ENCODE measurements at regions of chr9 and their contacts with region 1.

Region 1: DNA sequence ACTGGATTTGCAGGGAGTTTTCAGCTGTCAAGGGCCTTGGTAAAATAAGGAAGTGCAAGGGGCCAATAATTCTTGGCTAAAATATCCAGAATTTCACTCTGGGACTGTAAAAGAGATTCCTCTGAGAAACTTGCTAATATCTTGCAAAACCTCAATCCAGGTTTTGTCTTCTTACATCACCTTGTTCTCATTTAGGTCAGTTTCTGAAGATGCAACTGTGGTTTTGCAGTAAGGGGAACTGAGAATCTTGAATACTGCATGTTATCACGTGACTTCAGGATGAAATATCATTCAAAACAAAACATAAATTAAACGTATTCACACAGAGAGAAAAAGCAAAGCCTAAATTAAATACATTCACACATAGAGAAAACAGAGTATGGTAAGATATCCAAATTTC is 35.0 kb upstream of the RIC1 start:
- DNase-seq: no peak
- H3K4me3 ChIP-seq: no peak overlapping the region
- H3K27ac ChIP-seq: no peak overlapping the region
- H3K4me1 ChIP-seq: peaks cover 13% of the 10 kb centered on the region
- H3K27me3 ChIP-seq: no peaks in the 10 kb centered on the region
- CTCF ChIP-seq: no peak

Region 2: GRCh38 chr9:5186416-5187169 is 407.3 kb before region 1 on chr9:
- intact Hi-C with region 1: loop called (anchors 5 kb)
- DNase-seq: no peak
- H3K4me3 ChIP-seq: no peak overlapping the region
- H3K27ac ChIP-seq: no peak overlapping the region
- H3K4me1 ChIP-seq: no peaks in the 10 kb centered on the region
- H3K27me3 ChIP-seq: peaks cover 10% of the 10 kb centered on the region
- CTCF ChIP-seq: peak; percentile 79

Region 3: GRCh38 chr9:5449521-5450358 is 144.2 kb before region 1 on chr9:
- intact Hi-C with region 1: loop called (anchors 5 kb)
- DNase-seq: no peak
- H3K4me3 ChIP-seq: peak overlapping the region; percentile 71
- H3K27ac ChIP-seq: peak overlapping the region; percentile 85
- H3K4me1 ChIP-seq: peaks cover 42% of the 10 kb centered on the region
- H3K27me3 ChIP-seq: no peaks in the 10 kb centered on the region
- CTCF ChIP-seq: no peak

Region 4: GRCh38 chr9:5536684-5537083 is 57.2 kb before region 1 on chr9:
- intact Hi-C with region 1: no loop called
- DNase-seq: no peak
- H3K4me3 ChIP-seq: no peak overlapping the region
- H3K27ac ChIP-seq: no peak overlapping the region
- H3K4me1 ChIP-seq: peaks cover 11% of the 10 kb centered on the region
- H3K27me3 ChIP-seq: no peaks in the 10 kb centered on the region
- CTCF ChIP-seq: no peak

Measured in left ventricle myocardium inferior (tissue), 1 donor.